Uterus (tissue), 4 donors: ENCODE measurements at regions of chr2 and their contacts with region 1.

Region 1: GRCh38 chr2:236889791-236890704 is 195.6 kb upstream of the COPS8 start:
- DNase-seq: no peak
- H3K4me3 ChIP-seq: no peak overlapping the region
- H3K27ac ChIP-seq: peak overlapping the region in 1 of 2 donors; percentile 33
- H3K4me1 ChIP-seq: no peaks in the 10 kb centered on the region
- H3K27me3 ChIP-seq: no peaks in the 10 kb centered on the region
- CTCF ChIP-seq: no peak
- POLR2A ChIP-seq: no peak

Region 2: DNA sequence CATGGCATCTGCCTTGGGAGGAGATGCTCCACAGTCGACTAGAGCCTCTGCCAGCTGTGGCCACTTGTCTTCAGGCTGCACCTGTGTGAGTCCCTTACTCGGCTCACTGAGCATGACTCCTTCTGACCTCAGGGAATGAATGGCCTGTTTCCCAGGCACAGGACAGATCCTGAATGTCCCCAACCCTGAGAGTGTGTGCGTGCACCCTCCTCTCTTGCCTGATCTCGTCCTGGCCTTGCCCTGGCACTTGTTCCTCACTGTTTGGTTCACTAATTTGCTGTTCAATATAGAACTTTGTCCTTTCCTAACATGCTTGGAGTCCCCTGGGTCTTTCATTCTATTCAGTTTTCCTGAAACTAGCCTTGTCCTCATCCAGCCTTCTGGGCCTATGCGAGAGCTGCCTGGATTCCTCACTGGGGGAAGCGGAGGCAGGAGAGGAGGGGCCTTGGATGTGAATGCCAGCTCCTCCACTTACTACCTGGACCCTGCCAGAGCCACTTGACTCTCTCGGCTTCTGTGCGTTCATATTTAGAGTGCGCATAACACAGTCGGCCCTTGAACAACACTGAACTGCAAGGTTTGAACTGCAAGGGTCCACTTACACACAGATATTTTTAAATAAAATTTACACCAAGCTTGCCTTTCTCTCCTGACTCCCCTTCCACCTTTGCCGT is 135.6 kb before region 1 on chr2:
- intact Hi-C with region 1: no loop called
- DNase-seq: no peak
- H3K4me3 ChIP-seq: no peak overlapping the region
- H3K27ac ChIP-seq: no peak overlapping the region
- H3K4me1 ChIP-seq: no peaks in the 10 kb centered on the region
- H3K27me3 ChIP-seq: no peaks in the 10 kb centered on the region
- CTCF ChIP-seq: no peak
- POLR2A ChIP-seq: no peak

Region 3: DNA sequence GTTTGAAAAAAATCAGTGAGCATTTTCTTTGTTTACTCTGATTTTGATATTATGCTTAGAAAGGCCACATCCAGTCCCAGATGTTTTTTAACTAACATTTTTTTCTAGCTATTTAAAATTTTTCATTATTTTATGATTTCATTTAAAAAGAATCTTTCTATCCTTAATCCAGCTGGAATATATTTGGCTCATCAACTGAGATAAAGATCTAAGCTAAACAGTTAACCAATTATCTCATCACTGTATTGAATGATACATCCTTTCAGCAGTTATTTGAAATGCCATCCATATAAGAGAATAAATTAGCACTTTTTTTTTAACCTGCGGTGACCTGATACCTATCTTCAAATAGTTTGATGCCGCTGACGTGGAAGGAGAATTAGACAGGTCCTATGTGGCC is 49.8 kb before region 1 on chr2:
- intact Hi-C with region 1: loop called (anchors 2 kb)
- DNase-seq: no peak
- H3K4me3 ChIP-seq: no peak overlapping the region
- H3K27ac ChIP-seq: no peak overlapping the region
- H3K4me1 ChIP-seq: no peaks in the 10 kb centered on the region
- H3K27me3 ChIP-seq: no peaks in the 10 kb centered on the region
- CTCF ChIP-seq: no peak
- POLR2A ChIP-seq: no peak